ENCODE measurements at regions of chr19 and their contacts with region 1.

Region 1: DNA sequence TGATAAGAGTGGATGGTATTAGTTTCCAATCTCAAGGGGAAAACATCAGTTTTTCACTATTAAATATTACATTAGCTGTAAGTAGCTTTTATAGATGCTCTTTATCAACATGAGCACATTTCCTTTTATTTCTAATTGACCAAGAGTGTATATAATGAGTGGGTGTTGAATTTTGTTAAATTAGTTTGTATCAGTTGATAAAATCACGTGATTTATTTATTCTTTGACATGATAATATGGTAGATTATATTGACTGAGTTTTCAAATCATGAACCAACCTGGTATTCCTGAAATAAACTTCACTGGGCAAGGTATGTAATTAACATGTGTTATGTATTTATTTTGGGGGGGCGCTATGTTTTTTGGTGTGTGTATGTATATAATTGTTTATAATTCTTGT is 364.4 kb downstream of the TSHZ3 start:
- DNase-seq: no peak
- ATAC-seq: no peak
- H3K4me3 ChIP-seq: no peak overlapping the region
- H3K27ac ChIP-seq: no peak overlapping the region
- H3K4me1 ChIP-seq: no peaks in the 10 kb centered on the region
- CTCF ChIP-seq: no peak
- EP300 ChIP-seq: no peak
- POLR2A ChIP-seq: no peak
- RAD21 ChIP-seq: no peak

Region 2: DNA sequence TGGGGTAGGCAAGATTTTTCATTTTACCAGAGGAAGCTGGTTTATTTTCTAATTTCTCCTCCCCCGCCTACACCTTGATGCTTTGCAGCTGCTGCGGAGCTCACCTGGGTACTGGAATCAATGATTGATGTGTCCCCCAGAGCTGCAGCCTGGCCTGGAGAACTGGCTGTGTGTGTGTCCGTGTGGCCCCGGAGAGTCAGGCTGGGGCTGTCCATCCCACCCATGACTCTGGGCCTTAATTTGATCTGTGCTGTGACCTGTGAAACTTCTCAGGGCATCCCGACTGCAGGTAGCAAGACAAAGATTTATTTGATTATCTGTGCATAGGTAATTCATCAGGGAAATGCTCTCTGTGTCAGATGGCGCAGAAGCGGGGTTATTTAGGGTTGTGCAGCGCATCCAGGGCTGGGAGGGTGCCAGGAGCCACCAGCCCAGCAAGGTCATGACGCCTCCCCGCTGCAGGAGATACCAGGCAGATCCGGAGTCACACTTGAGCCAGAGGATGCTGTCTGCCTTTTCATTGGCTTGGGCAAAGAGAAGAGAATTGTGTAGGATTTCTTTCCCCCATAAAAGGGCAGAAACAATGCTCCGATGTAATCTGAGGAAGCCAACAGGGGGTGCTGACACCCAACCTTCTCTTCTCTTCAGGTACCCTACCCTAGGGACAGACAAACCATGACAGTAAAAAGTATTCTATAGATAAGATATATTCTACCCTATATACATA is 17.8 kb after region 1 on chr19:
- CTCF ChIA-PET with region 1: interaction called, 14 read pairs
- POLR2A ChIA-PET with region 1: no interaction called
- DNase-seq: no peak
- ATAC-seq: no peak; a peak in 1 of 6 replicates
- H3K4me3 ChIP-seq: no peak overlapping the region
- H3K27ac ChIP-seq: no peak overlapping the region
- H3K4me1 ChIP-seq: no peaks in the 10 kb centered on the region
- CTCF ChIP-seq: no peak
- EP300 ChIP-seq: no peak
- POLR2A ChIP-seq: no peak
- RAD21 ChIP-seq: peak; percentile 24 to 27; a peak in 1 of 5 replicates